Endothelial cell of umbilical vein (primary cell): ENCODE measurements at regions of chr5 and their contacts with region 1.

Region 1: GRCh38 chr5:147483961-147484707 is 25.7 kb downstream of the DPYSL3 start:
- DNase-seq: peak; percentile 99
- H3K4me3 ChIP-seq: no peak overlapping the region
- H3K27ac ChIP-seq: peak overlapping the region; percentile 98
- H3K4me1 ChIP-seq: peaks cover 84% of the 10 kb centered on the region
- H3K27me3 ChIP-seq: no peaks in the 10 kb centered on the region
- CTCF ChIP-seq: no peak
- POLR2A ChIP-seq: no peak

Region 2: DNA sequence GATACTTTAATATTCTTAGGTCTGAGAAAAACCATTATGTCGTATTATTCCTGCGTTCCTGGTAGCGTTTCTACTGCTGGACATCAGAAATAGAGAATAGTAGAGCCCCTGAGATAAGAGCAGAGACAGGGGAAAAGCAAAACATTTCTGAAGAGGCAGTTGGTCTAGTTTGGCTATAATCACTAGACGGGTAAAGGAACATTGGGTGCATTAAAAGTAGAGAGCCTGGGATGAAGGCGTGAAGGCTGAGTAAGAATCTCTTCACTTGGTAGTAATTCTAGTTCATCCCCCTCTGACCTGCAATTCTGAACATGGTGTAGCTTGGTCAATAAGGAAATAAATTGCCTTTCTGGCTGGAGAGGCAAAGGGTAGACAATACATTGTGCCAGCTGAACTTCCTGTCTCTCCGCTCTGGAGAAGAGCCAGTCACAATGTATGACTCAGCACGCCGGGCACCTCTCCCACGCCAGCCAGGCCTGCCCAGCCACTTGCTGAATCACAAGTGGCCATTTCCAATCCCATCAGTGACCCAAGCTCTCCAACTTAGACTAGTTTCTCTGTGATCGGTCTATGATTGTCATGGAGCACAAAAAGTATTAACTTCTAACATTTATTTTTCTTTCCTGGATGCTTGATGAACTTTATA is 174.0 kb before region 1 on chr5:
- CTCF ChIA-PET with region 1: no interaction called
- POLR2A ChIA-PET with region 1: no interaction called
- dilution Hi-C with region 1: no loop called
- intact Hi-C with region 1: loop called (anchors 1 kb)
- DNase-seq: peak; percentile 96
- H3K4me3 ChIP-seq: no peak overlapping the region
- H3K27ac ChIP-seq: peak overlapping the region; percentile 83
- H3K4me1 ChIP-seq: peaks cover 15% of the 10 kb centered on the region
- H3K27me3 ChIP-seq: no peaks in the 10 kb centered on the region
- CTCF ChIP-seq: no peak
- POLR2A ChIP-seq: no peak

Region 3: GRCh38 chr5:147453875-147454814 is 30.0 kb before region 1 on chr5:
- CTCF ChIA-PET with region 1: interaction called, 23 read pairs
- POLR2A ChIA-PET with region 1: no interaction called
- dilution Hi-C with region 1: no loop called
- intact Hi-C with region 1: loop called (anchors 1 kb)
- DNase-seq: peak; percentile 92
- H3K4me3 ChIP-seq: peak overlapping the region; percentile 43 to 88 (median 55)
- H3K27ac ChIP-seq: peak overlapping the region; percentile 37
- H3K4me1 ChIP-seq: peaks cover 4% of the 10 kb centered on the region
- H3K27me3 ChIP-seq: no peaks in the 10 kb centered on the region
- CTCF ChIP-seq: peak; percentile 90 to 95
- POLR2A ChIP-seq: no peak

Region 4: GRCh38 chr5:147504011-147504410 is 19.9 kb after region 1 on chr5:
- CTCF ChIA-PET with region 1: interaction called, 21 read pairs
- POLR2A ChIA-PET with region 1: no interaction called
- dilution Hi-C with region 1: no loop called
- intact Hi-C with region 1: loop called (anchors 1 kb)
- DNase-seq: peak; percentile 63
- H3K4me3 ChIP-seq: no peak overlapping the region
- H3K27ac ChIP-seq: peak overlapping the region; percentile 15
- H3K4me1 ChIP-seq: peaks cover 35% of the 10 kb centered on the region
- H3K27me3 ChIP-seq: no peaks in the 10 kb centered on the region
- CTCF ChIP-seq: no peak
- POLR2A ChIP-seq: no peak

Region 5: GRCh38 chr5:147530530-147531389 is 46.6 kb after region 1 on chr5:
- CTCF ChIA-PET with region 1: interaction called, 3 read pairs
- POLR2A ChIA-PET with region 1: interaction called, 4 read pairs
- dilution Hi-C with region 1: no loop called
- intact Hi-C with region 1: loop called (anchors 1 kb)
- DNase-seq: peak; percentile 85
- H3K4me3 ChIP-seq: peak overlapping the region in 1 of 3 experiments; percentile 22
- H3K27ac ChIP-seq: peak overlapping the region; percentile 69
- H3K4me1 ChIP-seq: peaks cover 33% of the 10 kb centered on the region
- H3K27me3 ChIP-seq: no peaks in the 10 kb centered on the region
- CTCF ChIP-seq: no peak
- POLR2A ChIP-seq: no peak

Region 6: DNA sequence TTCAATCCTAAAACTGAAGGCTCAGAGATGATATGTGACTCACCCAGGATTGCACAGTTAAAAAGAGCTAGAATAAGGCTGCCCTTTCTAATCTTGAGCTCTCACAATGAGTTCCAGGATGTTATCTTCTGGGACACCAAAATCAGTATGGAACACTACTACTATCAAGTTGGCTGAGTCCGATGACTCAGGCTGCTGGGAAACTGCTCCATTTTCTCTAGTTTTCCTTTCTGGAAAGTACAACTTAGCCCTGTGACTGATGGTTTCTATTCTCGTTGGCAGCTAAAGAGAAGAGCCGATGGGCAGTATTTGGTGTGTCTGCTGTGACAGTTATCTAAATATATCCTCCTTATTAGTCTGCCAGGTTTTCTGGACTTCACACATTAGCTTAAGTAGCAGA is 63.6 kb after region 1 on chr5:
- CTCF ChIA-PET with region 1: no interaction called
- POLR2A ChIA-PET with region 1: no interaction called
- dilution Hi-C with region 1: no loop called
- intact Hi-C with region 1: no loop called
- DNase-seq: peak; percentile 55
- H3K4me3 ChIP-seq: no peak overlapping the region
- H3K27ac ChIP-seq: no peak overlapping the region
- H3K4me1 ChIP-seq: peaks cover 11% of the 10 kb centered on the region
- H3K27me3 ChIP-seq: no peaks in the 10 kb centered on the region
- CTCF ChIP-seq: no peak
- POLR2A ChIP-seq: no peak